Ovary (tissue), 10 donors: ENCODE measurements at regions of chr11 and their contacts with region 1.

Region 1: GRCh38 chr11:35822815-35823495 is 120.9 kb upstream of the LDLRAD3 start:
- DNase-seq: no peak
- H3K4me3 ChIP-seq: no peak overlapping the region
- H3K27ac ChIP-seq: no peak overlapping the region
- H3K4me1 ChIP-seq: no peaks in the 10 kb centered on the region
- H3K27me3 ChIP-seq: no peaks in the 10 kb centered on the region
- CTCF ChIP-seq: no peak
- EP300 ChIP-seq: no peak
- POLR2A ChIP-seq: no peak

Region 2: DNA sequence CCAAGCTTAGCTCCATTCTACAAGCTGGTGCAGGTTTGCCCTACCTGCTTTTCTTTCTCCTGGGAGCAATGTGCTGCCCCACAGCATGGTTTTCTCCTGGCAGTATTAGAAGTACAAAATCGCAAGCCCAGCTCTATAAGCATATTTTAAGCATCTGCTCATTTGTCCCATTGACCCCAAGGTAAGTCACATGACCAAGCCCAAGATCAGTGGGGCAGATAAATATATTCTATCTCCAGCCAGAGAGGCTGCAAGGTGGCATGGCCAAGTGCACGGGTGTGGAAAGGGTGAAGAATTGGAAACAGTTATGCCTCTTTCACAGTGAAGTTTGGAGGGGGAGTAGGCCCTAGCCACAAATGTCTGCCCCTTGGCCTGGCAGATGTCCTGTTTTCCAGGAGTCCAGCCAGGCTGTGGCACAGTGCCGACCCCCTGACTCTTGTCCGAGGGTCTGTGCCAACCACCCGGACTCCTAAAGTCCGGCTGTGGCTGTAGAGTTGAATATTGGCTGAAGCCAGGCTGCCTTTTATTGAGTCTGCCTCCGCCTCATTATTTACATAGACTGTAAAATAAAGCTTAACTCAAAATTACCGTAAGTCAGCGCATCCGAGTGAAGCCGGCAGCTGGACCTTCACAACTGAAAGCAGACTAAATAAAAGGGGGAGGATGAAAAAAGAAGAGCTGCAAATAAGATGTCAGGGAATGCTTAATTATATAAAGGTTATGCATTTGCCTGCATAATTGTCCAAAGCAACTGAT is 300.6 kb after region 1 on chr11:
- intact Hi-C with region 1: loop called in 1 of 4 experiments (anchors 10 kb)
- DNase-seq: peak in 4 of 5 donors; percentile 20 to 70 (median 64)
- H3K4me3 ChIP-seq: no peak overlapping the region
- H3K27ac ChIP-seq: peak overlapping the region in 1 of 2 donors; percentile 5
- H3K4me1 ChIP-seq: peaks cover 9% of the 10 kb centered on the region
- H3K27me3 ChIP-seq: no peaks in the 10 kb centered on the region
- CTCF ChIP-seq: no peak
- EP300 ChIP-seq: no peak
- POLR2A ChIP-seq: no peak

Region 3: DNA sequence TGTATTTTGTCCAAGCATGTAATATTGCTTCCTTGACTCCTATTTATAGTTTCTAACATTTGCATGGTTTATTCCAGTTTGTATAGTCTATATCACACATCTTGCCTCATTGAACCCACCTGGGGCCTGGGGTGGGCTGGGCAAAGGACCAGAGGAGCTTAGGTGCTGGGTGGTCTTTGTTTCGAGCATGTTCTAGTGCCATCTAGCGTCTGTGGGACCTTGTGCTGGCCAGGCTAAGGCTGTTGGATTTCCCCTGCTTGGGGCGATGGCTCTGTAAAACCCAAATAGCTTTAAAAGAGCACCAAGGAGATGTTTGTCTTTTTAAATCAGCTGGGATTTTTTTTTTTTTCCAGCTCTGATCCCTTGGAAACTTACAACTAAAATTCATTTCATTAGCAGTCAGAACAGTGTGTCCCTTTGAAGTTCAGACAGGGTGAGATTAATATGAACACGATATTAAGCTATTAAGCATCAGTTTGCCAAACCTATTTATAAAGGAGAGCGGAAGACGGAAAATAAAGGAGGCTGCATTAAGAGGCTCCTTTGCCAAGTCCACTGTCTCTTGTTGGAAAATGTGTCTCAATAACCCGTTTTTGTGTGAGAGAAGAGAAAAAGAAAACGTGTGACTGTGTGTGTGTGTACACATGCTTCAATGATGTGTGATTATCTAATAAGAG is 308.9 kb after region 1 on chr11:
- intact Hi-C with region 1: loop called in 3 of 4 experiments (anchors 10 kb)
- DNase-seq: peak; percentile 63 to 76 (median 71)
- H3K4me3 ChIP-seq: no peak overlapping the region
- H3K27ac ChIP-seq: no peak overlapping the region
- H3K4me1 ChIP-seq: no peaks in the 10 kb centered on the region
- H3K27me3 ChIP-seq: no peaks in the 10 kb centered on the region
- CTCF ChIP-seq: peak; percentile 44 to 75 (median 54)
- EP300 ChIP-seq: no peak
- POLR2A ChIP-seq: no peak

Region 4: GRCh38 chr11:36258730-36259360 is 435.9 kb after region 1 on chr11:
- intact Hi-C with region 1: loop called in 2 of 4 experiments (anchors 10 kb)
- DNase-seq: peak; percentile 46 to 59 (median 56)
- H3K4me3 ChIP-seq: no peak overlapping the region
- H3K27ac ChIP-seq: no peak overlapping the region
- H3K4me1 ChIP-seq: no peaks in the 10 kb centered on the region
- H3K27me3 ChIP-seq: no peaks in the 10 kb centered on the region
- CTCF ChIP-seq: no peak
- EP300 ChIP-seq: no peak
- POLR2A ChIP-seq: no peak

Region 5: GRCh38 chr11:36265793-36266628 is 443.1 kb after region 1 on chr11:
- intact Hi-C with region 1: loop called in 1 of 4 experiments (anchors 5 kb)
- DNase-seq: peak; percentile 34 to 74 (median 64)
- H3K4me3 ChIP-seq: no peak overlapping the region
- H3K27ac ChIP-seq: no peak overlapping the region
- H3K4me1 ChIP-seq: no peaks in the 10 kb centered on the region
- H3K27me3 ChIP-seq: no peaks in the 10 kb centered on the region
- CTCF ChIP-seq: peak in 2 of 3 donors; percentile 74 to 75
- EP300 ChIP-seq: no peak
- POLR2A ChIP-seq: no peak